ENCODE measurements at regions of chr3 and their contacts with region 1.

Region 1: DNA sequence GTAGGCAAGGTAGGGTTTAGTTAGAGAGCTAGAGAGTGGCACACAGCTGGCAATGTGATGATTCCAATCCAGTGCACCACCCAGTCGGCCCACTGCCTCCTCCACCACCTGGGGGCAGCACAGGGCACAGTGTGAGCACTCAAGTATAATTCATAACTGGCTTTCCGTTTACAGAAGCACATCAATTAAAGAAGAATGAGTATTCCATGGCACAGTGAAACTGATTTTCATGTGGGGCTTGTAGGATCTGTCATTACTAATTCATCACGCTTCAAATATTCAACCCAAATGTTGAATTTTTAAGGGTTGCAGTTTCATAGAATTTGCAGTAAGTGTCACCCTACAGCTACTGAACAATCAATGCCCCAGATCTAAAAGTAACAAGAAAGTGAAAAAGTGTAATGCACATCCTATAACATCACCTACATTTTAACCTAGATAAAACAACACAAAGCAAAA is 149.9 kb downstream of the IGSF11 start:
- DNase-seq: peak; percentile 62

Region 2: GRCh38 chr3:119034256-119035013 is 149.7 kb after region 1 on chr3 and contains the start of gene IGSF11:
- CTCF ChIA-PET with region 1: interaction called, 27 read pairs
- POLR2A ChIA-PET with region 1: interaction called, 8 read pairs
- DNase-seq: peak; percentile 81

Region 3: DNA sequence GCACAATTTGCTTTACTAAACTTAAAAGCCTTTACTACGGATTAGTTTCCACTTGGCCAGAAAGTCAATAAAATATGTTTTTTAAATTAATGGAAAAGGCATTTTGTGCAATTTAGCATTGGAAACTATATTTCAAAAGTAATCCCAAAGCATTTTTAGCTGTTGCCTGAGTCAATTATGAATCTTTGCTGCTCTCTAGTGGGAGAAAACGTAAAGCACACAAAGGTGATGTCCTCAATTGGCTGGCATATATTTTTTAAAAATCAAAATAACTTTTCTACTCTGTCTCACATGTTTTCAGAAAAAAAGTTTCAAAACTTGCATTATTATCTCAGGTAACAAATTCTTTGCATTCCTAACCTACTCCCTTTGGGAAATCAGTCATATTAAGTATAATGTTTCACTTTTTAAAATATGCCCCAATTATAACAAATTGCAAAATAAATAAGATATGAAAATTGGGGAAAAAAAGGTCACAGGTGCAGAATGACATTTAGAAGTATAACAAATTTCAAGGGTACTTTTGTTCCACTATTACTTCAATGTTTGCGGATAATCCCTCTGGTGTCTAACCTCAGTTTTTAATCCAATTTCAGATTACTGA is 213.9 kb after region 1 on chr3:
- CTCF ChIA-PET with region 1: interaction called, 88 read pairs
- POLR2A ChIA-PET with region 1: no interaction called
- DNase-seq: peak; percentile 33